ENCODE measurements at regions of chr2 and their contacts with region 1.

Region 1: GRCh38 chr2:215022418-215022817 is 116.0 kb downstream of the ABCA12 start:
- DNase-seq: no peak
- ATAC-seq: no peak
- H3K4me3 ChIP-seq: no peak overlapping the region
- H3K27ac ChIP-seq: no peak overlapping the region
- H3K4me1 ChIP-seq: peaks cover 11% of the 10 kb centered on the region
- H3K27me3 ChIP-seq: no peaks in the 10 kb centered on the region
- CTCF ChIP-seq: no peak
- EP300 ChIP-seq: no peak
- POLR2A ChIP-seq: no peak
- RAD21 ChIP-seq: no peak

Region 2: DNA sequence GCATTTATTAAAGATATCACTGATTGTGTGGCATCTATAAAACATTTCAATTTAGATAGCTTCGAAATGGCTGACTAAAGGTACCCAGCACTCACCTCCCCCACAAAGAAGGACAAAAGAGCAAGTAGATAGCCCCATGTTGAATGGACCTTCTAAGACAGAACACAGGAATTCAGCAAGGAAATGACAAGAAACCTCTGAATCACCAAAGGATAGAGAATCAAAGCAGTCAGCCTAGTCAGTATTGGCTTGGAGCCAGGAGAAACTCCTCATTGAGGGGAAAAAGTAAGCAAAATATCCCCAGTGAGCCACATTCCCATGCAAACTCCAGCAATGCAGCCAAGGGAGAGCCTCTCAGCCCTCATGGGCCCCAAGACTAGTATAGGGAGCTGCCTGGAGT is 326.6 kb before region 1 on chr2:
- CTCF ChIA-PET with region 1: no interaction called
- POLR2A ChIA-PET with region 1: no interaction called
- RAD21 ChIA-PET with region 1: no interaction called
- SMC1A ChIA-PET with region 1: no interaction called
- in situ Hi-C with region 1: no loop called
- intact Hi-C with region 1: no loop called
- DNase-seq: no peak
- ATAC-seq: no peak
- H3K4me3 ChIP-seq: no peak overlapping the region
- H3K27ac ChIP-seq: no peak overlapping the region
- H3K4me1 ChIP-seq: no peaks in the 10 kb centered on the region
- H3K27me3 ChIP-seq: no peaks in the 10 kb centered on the region
- CTCF ChIP-seq: no peak
- EP300 ChIP-seq: no peak
- POLR2A ChIP-seq: no peak
- RAD21 ChIP-seq: no peak

Region 3: DNA sequence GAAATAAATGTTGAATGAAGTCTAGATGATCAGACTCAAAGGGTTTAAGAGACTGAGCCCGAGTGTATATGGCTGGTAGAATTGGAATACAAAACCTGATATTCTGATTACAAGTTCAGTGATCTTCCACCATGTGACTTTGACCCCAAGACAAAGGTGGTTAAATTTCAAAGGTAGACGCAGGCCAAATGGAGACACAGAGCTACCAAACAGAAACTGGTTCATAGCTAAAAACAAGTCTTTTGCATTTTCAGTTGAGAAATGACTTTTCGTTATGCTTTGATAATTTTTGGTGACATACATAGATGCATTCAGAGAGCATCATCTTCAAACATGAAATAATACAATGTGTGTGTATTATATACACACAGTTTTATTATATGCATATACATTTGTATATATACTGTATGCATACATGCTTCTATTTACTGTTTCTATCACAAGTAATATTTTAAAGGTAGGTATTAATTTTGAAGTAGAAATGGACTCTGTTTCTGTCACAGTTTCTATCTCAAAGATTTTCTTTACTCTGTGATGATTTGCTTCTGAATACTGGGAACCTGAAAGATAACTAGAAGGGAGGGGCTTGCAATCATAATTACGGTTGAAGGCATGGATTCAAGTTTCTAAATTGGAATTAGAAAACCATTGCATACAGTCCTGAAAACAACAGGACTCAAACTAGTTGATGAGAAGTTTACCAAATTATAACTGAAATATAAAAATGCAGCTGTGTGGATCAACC is 26.3 kb before region 1 on chr2:
- CTCF ChIA-PET with region 1: interaction called, 3 read pairs
- POLR2A ChIA-PET with region 1: interaction called, 3 read pairs
- RAD21 ChIA-PET with region 1: interaction called, 4 read pairs
- SMC1A ChIA-PET with region 1: interaction called, 11 read pairs
- in situ Hi-C with region 1: no loop called
- intact Hi-C with region 1: loop called (anchors 2 kb)
- DNase-seq: peak; percentile 85
- ATAC-seq: peak; percentile 96
- H3K4me3 ChIP-seq: 0 out of 2 replicates have a peak overlapping the region, but pooled peaks have one; percentile 21
- H3K27ac ChIP-seq: peak overlapping the region; percentile 89
- H3K4me1 ChIP-seq: peaks cover 20% of the 10 kb centered on the region
- H3K27me3 ChIP-seq: no peaks in the 10 kb centered on the region
- CTCF ChIP-seq: no peak
- EP300 ChIP-seq: peak; percentile 70 to 82; a peak in 2 of 4 replicates
- POLR2A ChIP-seq: no peak
- RAD21 ChIP-seq: no peak

Region 4: GRCh38 chr2:215002500-215002899 is 19.9 kb before region 1 on chr2:
- CTCF ChIA-PET with region 1: no interaction called
- POLR2A ChIA-PET with region 1: no interaction called
- RAD21 ChIA-PET with region 1: no interaction called
- SMC1A ChIA-PET with region 1: interaction called, 11 read pairs
- in situ Hi-C with region 1: no loop called
- intact Hi-C with region 1: loop called (anchors 2 kb)
- DNase-seq: no peak
- ATAC-seq: peak; percentile 84
- H3K4me3 ChIP-seq: no peak overlapping the region
- H3K27ac ChIP-seq: no peak overlapping the region
- H3K4me1 ChIP-seq: no peaks in the 10 kb centered on the region
- H3K27me3 ChIP-seq: no peaks in the 10 kb centered on the region
- CTCF ChIP-seq: peak; percentile 39 to 71 (median 43); a peak in 5 of 6 replicates
- EP300 ChIP-seq: no peak
- POLR2A ChIP-seq: no peak
- RAD21 ChIP-seq: peak; percentile 55

Region 5: DNA sequence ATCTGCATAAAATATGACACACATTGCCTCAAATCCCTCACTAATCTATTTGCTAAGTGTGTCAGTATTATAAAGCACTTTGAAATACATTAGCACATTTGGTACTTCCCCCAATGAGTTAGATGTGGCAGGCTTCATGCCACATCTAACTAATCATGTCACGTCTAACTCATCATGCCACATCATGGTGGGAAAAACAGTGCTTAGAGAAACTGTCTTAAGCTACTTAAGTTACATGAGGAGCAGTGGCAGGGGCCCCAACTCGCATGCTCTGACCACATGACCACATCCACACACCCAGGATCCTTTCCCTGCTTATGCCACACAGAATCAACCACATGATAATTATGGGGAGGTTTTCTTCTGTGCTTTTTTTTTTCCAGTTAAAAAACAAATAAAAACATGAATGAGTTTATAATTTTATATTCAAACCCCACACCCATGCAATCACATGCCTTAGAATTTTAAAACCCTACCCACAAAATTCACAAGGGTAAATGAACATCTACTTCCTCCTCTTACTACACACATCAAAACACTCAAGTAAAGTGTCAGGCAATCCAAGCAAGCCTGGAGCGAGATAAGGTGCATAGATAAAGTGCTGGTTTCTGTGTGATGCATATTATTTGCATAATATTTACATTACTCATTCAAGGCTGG is 114.4 kb after region 1 on chr2:
- CTCF ChIA-PET with region 1: no interaction called
- POLR2A ChIA-PET with region 1: no interaction called
- RAD21 ChIA-PET with region 1: no interaction called
- SMC1A ChIA-PET with region 1: interaction called, 3 read pairs
- in situ Hi-C with region 1: no loop called
- intact Hi-C with region 1: loop called (anchors 5 kb)
- DNase-seq: peak; percentile 72
- ATAC-seq: peak; percentile 85
- H3K4me3 ChIP-seq: 0 out of 2 replicates have a peak overlapping the region, but pooled peaks have one; percentile 9
- H3K27ac ChIP-seq: peak overlapping the region; percentile 85
- H3K4me1 ChIP-seq: peaks cover 16% of the 10 kb centered on the region
- H3K27me3 ChIP-seq: no peaks in the 10 kb centered on the region
- CTCF ChIP-seq: no peak
- EP300 ChIP-seq: no peak
- POLR2A ChIP-seq: no peak
- RAD21 ChIP-seq: no peak

Measured in GM12878 (cell line).